Esophagus squamous epithelium (tissue), 5 donors: ENCODE measurements at regions of chr4 and their contacts with region 1.

Region 1: DNA sequence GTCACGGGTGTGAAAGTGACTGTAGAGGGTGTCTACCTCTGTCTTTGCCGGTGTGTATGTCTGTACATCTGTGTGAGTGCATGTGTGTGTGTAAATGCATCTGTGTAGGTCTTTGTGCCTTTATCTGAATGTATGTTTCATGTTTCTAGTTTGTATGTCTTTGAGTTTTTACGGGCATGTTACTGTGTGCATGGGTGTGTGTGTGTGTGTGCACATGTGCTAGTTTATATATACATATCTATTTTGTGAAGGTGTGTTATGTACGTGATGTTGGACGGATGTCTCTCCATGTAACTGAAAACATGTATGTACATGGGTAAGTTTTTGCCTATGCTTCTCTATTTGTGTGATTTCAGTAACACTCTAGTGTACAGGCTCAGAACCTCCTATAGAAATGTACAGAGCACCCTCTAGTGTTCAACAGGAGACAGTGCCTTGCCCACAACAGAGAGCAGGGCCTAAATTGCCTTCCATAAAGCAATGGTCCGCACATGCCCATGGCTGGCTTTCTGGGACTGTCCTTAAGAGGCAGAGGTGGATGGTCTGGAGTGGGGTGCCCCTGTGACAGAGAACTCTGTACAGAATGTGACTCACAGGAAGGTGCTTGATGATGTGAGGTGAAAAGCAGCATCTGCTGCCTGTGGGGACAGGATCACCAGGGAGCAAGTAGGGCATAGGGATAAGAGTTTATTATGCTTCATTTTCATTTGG is 343.5 kb downstream of the RAPGEF2 start:
- DNase-seq: no peak
- H3K4me3 ChIP-seq: no peak overlapping the region
- H3K27ac ChIP-seq: no peak overlapping the region
- H3K4me1 ChIP-seq: no peaks in the 10 kb centered on the region
- H3K27me3 ChIP-seq: no peaks in the 10 kb centered on the region
- CTCF ChIP-seq: peak in 5 of 6 experiments; percentile 67 to 89 (median 82)
- POLR2A ChIP-seq: no peak

Region 2: DNA sequence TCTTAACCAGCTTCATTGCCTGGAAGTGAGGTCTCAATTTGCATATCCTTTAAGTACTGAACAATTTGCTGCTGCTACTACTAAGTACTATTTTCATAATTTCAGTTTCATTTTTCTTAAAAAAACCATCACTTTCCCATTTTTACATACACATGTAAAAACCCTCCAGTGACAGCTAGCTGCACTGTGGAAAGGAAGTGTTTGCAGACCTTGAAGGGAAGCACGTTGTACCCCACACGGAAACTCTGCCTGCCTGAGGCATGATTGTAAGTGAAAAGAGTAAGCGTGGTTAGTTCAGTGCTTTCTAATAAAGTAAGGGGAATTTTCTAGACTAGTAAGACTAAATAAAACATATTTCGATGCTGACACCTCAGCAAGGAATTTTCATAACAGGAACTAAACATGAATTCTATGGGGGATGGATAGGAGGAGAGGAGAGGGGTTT is 240.0 kb before region 1 on chr4:
- intact Hi-C with region 1: loop called (anchors 10 kb)
- DNase-seq: no peak
- H3K4me3 ChIP-seq: no peak overlapping the region
- H3K27ac ChIP-seq: no peak overlapping the region
- H3K4me1 ChIP-seq: peaks cover 0 to 41% (median 6%) of the 10 kb centered on the region in 3 donors
- H3K27me3 ChIP-seq: no peaks in the 10 kb centered on the region
- CTCF ChIP-seq: no peak
- POLR2A ChIP-seq: no peak